AG04450 (cell line): ENCODE measurements at regions of chr22 and their contacts with region 1.

Region 1: DNA sequence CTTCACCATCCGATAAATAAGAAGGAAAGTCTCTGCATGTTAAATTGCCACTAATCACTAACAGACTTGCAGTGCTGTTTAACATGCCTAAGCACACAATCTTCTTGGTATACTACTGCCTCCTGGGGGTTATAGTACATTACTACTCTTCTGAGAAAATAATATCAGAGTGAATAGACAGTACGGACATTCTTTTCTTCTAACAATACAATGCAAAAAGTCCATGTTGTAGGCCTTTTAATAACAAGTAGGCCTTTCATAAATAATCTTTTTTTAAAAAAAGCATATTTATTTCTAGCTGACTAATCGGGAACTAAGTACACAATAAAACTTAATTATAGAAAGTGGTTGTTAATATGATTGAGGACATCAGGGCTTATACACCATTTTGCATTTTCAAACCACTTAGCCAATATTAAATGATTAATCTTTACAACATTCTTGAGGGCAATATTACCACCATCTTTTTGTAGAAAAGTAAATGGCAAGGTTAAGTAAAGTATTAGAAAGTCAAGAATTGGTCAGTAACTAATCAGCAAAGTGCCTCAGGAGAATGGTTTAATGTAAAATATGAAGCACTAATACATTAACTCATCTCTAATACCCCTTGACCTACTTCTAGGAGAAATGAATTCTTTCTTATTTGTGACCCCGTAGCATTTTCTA is 84.7 kb downstream of the TTC28 start:
- DNase-seq: peak; percentile 23
- H3K4me3 ChIP-seq: no peak overlapping the region
- H3K27ac ChIP-seq: no peak overlapping the region
- H3K27me3 ChIP-seq: no peaks in the 10 kb centered on the region
- CTCF ChIP-seq: peak; percentile 76

Region 2: GRCh38 chr22:28019881-28020871 is 574.8 kb before region 1 on chr22:
- CTCF ChIA-PET with region 1: interaction called, 20 read pairs
- POLR2A ChIA-PET with region 1: no interaction called
- DNase-seq: no peak
- H3K4me3 ChIP-seq: no peak overlapping the region; the same call in 1 of the 2 replicates
- H3K27ac ChIP-seq: peak overlapping the region; percentile 39
- H3K27me3 ChIP-seq: no peaks in the 10 kb centered on the region
- CTCF ChIP-seq: peak; percentile 95

Region 3: GRCh38 chr22:28051787-28052356 is 543.1 kb before region 1 on chr22:
- CTCF ChIA-PET with region 1: interaction called, 23 read pairs
- POLR2A ChIA-PET with region 1: interaction called, 3 read pairs
- DNase-seq: no peak
- H3K4me3 ChIP-seq: no peak overlapping the region
- H3K27ac ChIP-seq: no peak overlapping the region
- H3K27me3 ChIP-seq: no peaks in the 10 kb centered on the region
- CTCF ChIP-seq: peak; percentile 97